Endothelial cell of umbilical vein (primary cell): ENCODE measurements at regions of chrX and their contacts with region 1.

Region 1: DNA sequence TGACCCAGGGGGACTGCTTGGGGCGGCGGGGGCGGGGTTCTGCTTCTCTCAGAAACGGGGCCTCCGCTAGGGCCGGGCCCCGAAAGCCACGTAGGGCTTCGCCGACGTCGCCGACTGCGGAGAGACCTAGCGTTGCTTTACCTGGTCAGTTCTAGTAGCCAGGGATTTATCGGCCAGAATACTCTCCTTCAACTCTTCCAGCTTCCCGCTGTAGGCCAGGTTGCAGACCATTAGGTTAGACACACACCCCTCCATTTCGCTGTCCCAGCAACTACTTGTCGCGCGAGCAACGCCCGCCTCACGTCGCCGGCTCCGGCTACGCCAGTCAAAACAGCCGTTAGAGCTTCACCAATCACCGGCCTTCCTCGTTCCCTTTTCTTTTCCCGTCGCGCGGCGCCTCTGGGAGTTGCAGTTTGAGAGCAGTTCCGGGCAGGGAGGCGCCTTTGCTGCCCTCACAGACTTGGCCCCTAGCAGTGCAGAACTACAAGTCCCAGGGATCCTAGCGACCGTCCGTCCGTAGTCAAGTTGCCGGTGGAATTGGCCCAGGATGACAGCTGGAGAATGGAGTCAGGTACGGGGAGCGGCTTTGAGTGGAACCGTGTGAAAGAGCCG is at the starts of genes ATG4A and PSMD10:
- DNase-seq: peak; percentile 97
- H3K4me3 ChIP-seq: peak within 1 kb of the TSS; percentile 82 to 98 (median 82)
- H3K27ac ChIP-seq: peak within 1 kb of the TSS; percentile 98
- H3K4me1 ChIP-seq: peaks cover 15% of the 10 kb centered on the region
- H3K27me3 ChIP-seq: no peaks in the 10 kb centered on the region
- CTCF ChIP-seq: no peak
- POLR2A ChIP-seq: peak; percentile 63
- total RNA-seq, gene ATG4A: 27.7 and 28.7 TPM in 2 replicates
- total RNA-seq, gene PSMD10: 71.9 and 82.7 TPM in 2 replicates

Region 2: GRCh38 chrX:106939566-106939965 is 1151.8 kb before region 1 on chrX:
- CTCF ChIA-PET with region 1: no interaction called
- POLR2A ChIA-PET with region 1: no interaction called
- dilution Hi-C with region 1: no loop called
- intact Hi-C with region 1: no loop called
- DNase-seq: no peak
- H3K4me3 ChIP-seq: no peak overlapping the region
- H3K27ac ChIP-seq: no peak overlapping the region
- H3K4me1 ChIP-seq: peaks cover 7% of the 10 kb centered on the region
- H3K27me3 ChIP-seq: no peaks in the 10 kb centered on the region
- CTCF ChIP-seq: no peak
- POLR2A ChIP-seq: no peak

Region 3: DNA sequence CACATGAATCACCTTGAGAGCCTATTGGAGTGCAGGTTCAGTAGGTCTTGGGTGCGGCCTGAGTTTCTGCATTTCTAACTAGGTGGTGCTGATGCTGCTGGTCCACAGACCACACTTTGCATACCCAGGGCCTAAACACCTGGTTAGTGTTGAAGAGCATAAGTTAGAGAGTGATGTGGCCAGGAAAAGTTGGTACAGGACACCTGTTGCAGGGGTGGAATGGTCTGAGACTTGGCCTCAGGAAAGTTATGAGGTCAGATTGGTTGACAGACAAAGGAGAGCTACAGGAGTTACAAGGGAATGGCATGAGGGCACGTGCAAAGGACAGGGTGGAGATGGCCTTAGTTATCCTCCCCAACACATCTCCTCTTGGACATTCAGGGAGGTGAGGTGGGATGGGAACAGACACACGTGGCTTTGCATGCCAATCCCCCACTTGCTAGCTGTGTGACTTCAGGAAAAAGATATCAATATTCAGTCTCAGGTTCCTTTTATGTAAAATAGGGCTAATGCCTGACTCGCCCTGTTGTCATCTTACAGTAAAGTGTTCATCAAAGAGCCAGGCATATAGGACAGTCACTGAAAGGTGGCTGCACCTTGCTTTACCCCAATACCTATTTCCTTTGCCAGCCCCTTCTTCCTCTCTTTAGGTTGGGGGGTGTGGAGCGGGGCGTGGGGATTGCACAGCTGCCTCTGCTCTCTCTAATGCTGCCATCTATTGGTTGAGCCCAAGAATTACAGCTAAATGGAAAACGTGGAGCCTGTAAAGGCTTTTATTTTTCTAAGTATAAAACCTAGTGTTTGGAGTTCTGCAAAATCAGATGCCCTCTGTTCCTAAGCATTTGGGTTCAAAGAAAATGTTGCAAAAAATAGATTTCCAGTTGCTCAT is 47.7 kb after region 1 on chrX:
- CTCF ChIA-PET with region 1: interaction called, 38 read pairs
- POLR2A ChIA-PET with region 1: no interaction called
- dilution Hi-C with region 1: no loop called
- intact Hi-C with region 1: loop called (anchors 1 kb)
- DNase-seq: no peak
- H3K4me3 ChIP-seq: no peak overlapping the region
- H3K27ac ChIP-seq: no peak overlapping the region
- H3K4me1 ChIP-seq: no peaks in the 10 kb centered on the region
- H3K27me3 ChIP-seq: no peaks in the 10 kb centered on the region
- CTCF ChIP-seq: peak; percentile 47 to 48
- POLR2A ChIP-seq: no peak

Region 4: GRCh38 chrX:108245459-108245858 is 154.1 kb after region 1 on chrX:
- CTCF ChIA-PET with region 1: no interaction called
- POLR2A ChIA-PET with region 1: no interaction called
- dilution Hi-C with region 1: no loop called
- intact Hi-C with region 1: no loop called
- DNase-seq: no peak
- H3K4me3 ChIP-seq: no peak overlapping the region
- H3K27ac ChIP-seq: no peak overlapping the region
- H3K4me1 ChIP-seq: no peaks in the 10 kb centered on the region
- H3K27me3 ChIP-seq: no peaks in the 10 kb centered on the region
- CTCF ChIP-seq: no peak
- POLR2A ChIP-seq: no peak

Region 5: GRCh38 chrX:108285356-108285755 is 194.0 kb after region 1 on chrX:
- CTCF ChIA-PET with region 1: no interaction called
- POLR2A ChIA-PET with region 1: no interaction called
- dilution Hi-C with region 1: no loop called
- intact Hi-C with region 1: no loop called
- DNase-seq: no peak
- H3K4me3 ChIP-seq: no peak overlapping the region
- H3K27ac ChIP-seq: no peak overlapping the region
- H3K4me1 ChIP-seq: no peaks in the 10 kb centered on the region
- H3K27me3 ChIP-seq: no peaks in the 10 kb centered on the region
- CTCF ChIP-seq: no peak
- POLR2A ChIP-seq: no peak

Region 6: DNA sequence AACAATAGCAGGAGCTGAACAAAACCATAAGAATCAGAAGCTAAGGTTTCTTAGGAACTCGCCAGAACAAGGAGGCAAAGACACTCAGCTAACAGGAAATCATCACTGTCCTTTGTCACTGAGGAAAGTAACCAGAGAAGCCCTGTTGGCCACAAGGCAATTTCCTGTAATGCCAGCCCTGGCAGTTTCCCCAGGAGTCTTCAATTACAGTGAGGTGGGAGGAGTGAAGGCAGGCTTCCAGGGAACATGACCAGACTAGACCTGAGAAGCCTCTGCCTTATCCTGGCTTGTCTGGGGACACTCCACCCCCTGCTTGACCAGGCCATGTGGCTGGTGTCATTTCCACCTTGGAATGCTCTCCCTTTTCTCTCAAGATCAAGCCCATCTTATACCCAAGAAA is 221.6 kb after region 1 on chrX:
- CTCF ChIA-PET with region 1: no interaction called
- POLR2A ChIA-PET with region 1: no interaction called
- dilution Hi-C with region 1: no loop called
- intact Hi-C with region 1: no loop called
- DNase-seq: peak; percentile 11
- H3K4me3 ChIP-seq: no peak overlapping the region
- H3K27ac ChIP-seq: no peak overlapping the region
- H3K4me1 ChIP-seq: no peaks in the 10 kb centered on the region
- H3K27me3 ChIP-seq: no peaks in the 10 kb centered on the region
- CTCF ChIP-seq: no peak
- POLR2A ChIP-seq: no peak